Activated CD4-positive, alpha-beta memory T cell treated with anti-CD3 and anti-CD28 coated beads, Interleukin-2, amount 10 ng/mL, durations not matched to agents 7 days and 5 days (primary cell): ENCODE measurements at regions of chr16 and their contacts with region 1.

Region 1: GRCh38 chr16:30445408-30446202 is at the start of gene SEPHS2:
- DNase-seq: peak; percentile 97
- H3K4me3 Mint-ChIP-seq: peak within 1 kb of the TSS; percentile 89
- H3K27ac Mint-ChIP-seq: peak within 1 kb of the TSS; percentile 89
- H3K4me1 Mint-ChIP-seq: peaks cover 56% of the 10 kb centered on the region
- H3K27me3 Mint-ChIP-seq: no peaks in the 10 kb centered on the region
- total RNA-seq, gene SEPHS2: 56.3 to 57.8 TPM

Region 2: GRCh38 chr16:30368122-30368791 is 77.3 kb before region 1 on chr16:
- CTCF ChIA-PET with region 1: no interaction called
- POLR2A ChIA-PET with region 1: no interaction called
- DNase-seq: no peak
- H3K4me3 Mint-ChIP-seq: peak overlapping the region; percentile 86
- H3K27ac Mint-ChIP-seq: peak overlapping the region; percentile 80
- H3K4me1 Mint-ChIP-seq: peaks cover 53% of the 10 kb centered on the region
- H3K27me3 Mint-ChIP-seq: no peaks in the 10 kb centered on the region

Region 3: DNA sequence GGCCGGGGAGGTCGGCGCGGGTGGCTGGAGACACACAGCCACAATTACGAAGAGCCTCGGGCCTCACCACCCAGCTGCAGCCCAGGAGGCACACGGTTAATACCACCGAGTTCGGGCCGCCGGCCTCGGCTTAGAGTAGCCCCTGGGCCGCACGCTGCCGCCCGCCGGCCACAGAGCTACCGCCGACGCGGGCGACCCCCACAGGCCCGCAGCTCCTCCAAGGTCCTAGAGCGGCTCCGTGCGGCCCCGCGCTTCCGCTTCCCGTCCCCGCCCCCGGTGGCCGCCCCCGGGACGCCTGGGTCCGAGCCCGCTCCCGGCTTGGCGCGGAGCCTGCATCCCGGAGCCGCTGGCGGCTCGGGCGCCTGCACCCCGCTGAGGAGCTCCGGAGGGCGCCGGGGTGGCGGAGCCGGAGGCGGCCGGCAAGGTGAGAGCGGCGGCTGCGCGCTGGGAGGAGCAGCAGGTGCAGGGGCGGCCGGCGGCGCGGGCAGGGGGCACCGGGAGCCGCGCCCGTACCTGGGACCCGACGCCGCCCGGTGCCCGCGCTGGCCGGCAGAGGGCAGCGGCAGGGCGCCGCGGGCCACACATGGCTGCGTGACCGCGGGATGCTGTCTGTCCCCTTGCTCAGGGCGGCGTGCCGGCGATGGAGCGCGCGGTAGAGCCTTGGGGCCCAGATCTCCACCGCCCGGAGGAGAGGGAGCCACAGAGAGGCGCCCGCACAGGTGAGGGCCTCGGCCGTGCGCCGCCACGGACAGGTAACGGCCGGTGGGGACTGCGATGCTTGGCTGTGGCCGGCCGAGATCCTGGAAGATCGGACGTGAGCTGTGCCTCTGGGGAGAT is 50.2 kb before region 1 on chr16 and contains the start of gene ZNF48:
- CTCF ChIA-PET with region 1: no interaction called
- POLR2A ChIA-PET with region 1: no interaction called
- DNase-seq: peak; percentile 59
- H3K4me3 Mint-ChIP-seq: peak within 1 kb of the TSS; percentile 84
- H3K27ac Mint-ChIP-seq: peak within 1 kb of the TSS; percentile 63
- H3K4me1 Mint-ChIP-seq: peaks cover 37% of the 10 kb centered on the region
- H3K27me3 Mint-ChIP-seq: no peaks in the 10 kb centered on the region
- total RNA-seq, gene ZNF48: 14.2 to 14.5 TPM

Region 4: DNA sequence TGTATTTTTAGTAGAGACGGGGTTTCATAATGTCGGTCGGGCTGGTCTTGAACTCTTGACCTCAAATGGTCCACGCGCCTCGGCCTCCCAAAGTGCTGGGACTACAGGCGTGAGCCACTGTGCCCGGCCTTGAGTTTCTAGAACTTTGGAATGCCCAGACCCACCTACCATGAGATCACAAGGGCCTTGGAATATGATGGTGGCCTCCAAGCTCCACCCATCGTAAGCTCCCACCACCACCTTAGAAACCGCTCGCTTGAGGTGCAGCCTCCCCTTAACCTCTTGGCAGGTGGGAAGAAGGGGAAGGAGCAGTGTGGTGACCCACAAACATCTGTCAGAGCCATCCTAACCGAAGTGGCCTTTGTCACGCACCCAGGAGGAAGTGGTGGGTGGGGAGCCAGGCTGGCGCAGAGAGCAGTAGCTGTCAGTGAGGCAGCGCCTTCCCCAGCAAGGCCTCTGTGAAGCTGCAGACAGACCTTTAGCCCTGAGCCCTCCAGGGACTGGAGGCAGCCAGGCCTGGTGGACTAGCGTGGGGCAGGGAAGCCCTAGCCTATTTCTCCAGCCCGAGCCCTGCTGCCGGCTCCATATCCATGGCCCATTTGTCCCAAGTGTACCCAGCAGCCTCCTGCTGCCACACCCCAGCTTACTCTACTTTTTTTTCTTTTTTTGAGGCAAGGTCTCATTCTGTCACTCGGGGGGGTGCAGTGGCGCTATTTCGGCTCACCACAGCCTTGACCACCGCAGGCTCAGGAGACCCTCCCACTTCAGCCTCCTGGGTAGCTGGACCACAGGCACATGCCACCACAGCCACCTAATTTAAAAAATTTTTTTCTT is 13.2 kb after region 1 on chr16:
- CTCF ChIA-PET with region 1: interaction called, 49 read pairs
- POLR2A ChIA-PET with region 1: interaction called, 55 read pairs
- DNase-seq: peak; percentile 95
- H3K4me3 Mint-ChIP-seq: peak overlapping the region; percentile 67
- H3K27ac Mint-ChIP-seq: peak overlapping the region; percentile 98
- H3K4me1 Mint-ChIP-seq: peaks cover 74% of the 10 kb centered on the region
- H3K27me3 Mint-ChIP-seq: peaks cover 2% of the 10 kb centered on the region

Region 5: GRCh38 chr16:30472328-30472942 is 26.8 kb after region 1 on chr16 and contains the start of gene ITGAL:
- CTCF ChIA-PET with region 1: interaction called, 45 read pairs
- POLR2A ChIA-PET with region 1: interaction called, 163 read pairs
- DNase-seq: peak; percentile 92
- H3K4me3 Mint-ChIP-seq: peak within 1 kb of the TSS; percentile 98
- H3K27ac Mint-ChIP-seq: peak within 1 kb of the TSS; percentile 96
- H3K4me1 Mint-ChIP-seq: peaks cover 58% of the 10 kb centered on the region
- H3K27me3 Mint-ChIP-seq: no peaks in the 10 kb centered on the region
- total RNA-seq, gene ITGAL: 583 to 586 TPM

Region 6: DNA sequence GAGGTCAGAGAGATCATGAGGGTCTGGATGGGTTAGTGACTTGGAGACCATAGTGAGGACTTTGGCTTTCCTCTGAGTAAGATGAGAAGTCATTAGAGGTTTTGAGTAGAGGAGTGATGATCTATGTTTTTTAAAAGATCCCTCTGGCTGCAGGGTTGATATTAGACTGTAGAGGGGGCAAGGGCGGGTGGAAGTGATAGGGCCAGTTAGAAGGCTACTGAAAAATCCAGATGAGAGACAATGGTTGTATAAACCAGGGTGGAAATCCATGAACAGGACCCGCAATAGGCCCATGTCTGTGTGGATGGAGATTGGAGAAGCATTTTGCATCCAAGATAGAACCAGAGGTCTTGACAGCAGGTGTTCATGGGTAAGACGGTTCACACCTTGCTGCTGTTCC is 36.8 kb after region 1 on chr16:
- CTCF ChIA-PET with region 1: interaction called, 17 read pairs
- POLR2A ChIA-PET with region 1: interaction called, 163 read pairs
- DNase-seq: peak; percentile 23
- H3K4me3 Mint-ChIP-seq: peak overlapping the region; percentile 4
- H3K27ac Mint-ChIP-seq: peak overlapping the region; percentile 78
- H3K4me1 Mint-ChIP-seq: peaks cover 63% of the 10 kb centered on the region
- H3K27me3 Mint-ChIP-seq: no peaks in the 10 kb centered on the region

Region 7: GRCh38 chr16:30491744-30492308 is 46.2 kb after region 1 on chr16:
- CTCF ChIA-PET with region 1: interaction called, 10 read pairs
- POLR2A ChIA-PET with region 1: interaction called, 5 read pairs
- DNase-seq: peak; percentile 44
- H3K4me3 Mint-ChIP-seq: no peak overlapping the region
- H3K27ac Mint-ChIP-seq: peak overlapping the region; percentile 66
- H3K4me1 Mint-ChIP-seq: peaks cover 47% of the 10 kb centered on the region
- H3K27me3 Mint-ChIP-seq: no peaks in the 10 kb centered on the region